Activated B cell treated with CpG ODN at 0.5 μM for 24 hours (primary cell): ENCODE measurements at regions of chr17 and their contacts with region 1.

Region 1: DNA sequence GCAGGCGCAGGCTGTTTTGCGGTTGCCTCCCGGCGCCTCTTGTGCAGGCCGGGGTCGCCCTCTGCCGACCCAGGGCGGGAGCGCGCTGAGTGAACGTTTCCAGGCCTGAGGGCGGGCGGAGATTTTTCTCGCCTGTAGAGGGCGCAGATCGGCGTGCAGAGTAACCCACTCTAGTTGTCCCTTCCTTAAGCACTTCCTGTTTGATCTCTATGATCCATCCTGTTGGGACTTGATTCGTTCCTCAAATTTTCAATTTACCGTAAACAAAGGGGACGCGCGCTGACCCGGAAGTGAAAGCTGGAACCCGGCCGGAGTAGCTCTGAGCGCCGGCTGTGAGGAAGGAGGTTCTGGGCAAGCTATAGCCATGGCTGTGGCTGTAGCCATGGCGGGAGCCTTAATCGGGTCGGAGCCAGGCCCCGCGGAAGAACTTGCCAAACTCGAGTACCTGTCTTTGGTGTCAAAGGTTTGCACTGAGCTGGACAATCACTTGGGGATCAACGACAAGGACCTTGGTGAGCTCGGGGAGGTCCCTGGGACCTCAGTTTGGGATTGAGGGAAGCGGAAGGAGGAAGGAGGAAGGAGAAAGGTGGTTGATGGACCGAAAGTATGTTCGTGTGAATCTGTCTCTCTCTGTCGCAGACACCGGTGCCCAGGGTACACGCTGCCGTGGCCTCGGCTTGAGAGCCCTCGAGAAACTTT is at the start of gene DHX8:
- DNase-seq: peak; percentile 99
- ATAC-seq: peak; percentile 97
- H3K4me3 Mint-ChIP-seq: peak within 1 kb of the TSS; percentile 94
- H3K27ac Mint-ChIP-seq: peak within 1 kb of the TSS; percentile 89
- H3K4me1 Mint-ChIP-seq: peaks cover 36% of the 10 kb centered on the region
- H3K27me3 Mint-ChIP-seq: no peaks in the 10 kb centered on the region
- CTCF ChIP-seq: peak; percentile 98
- total RNA-seq, gene DHX8: 60.6 and 63.4 TPM in 2 replicates

Region 2: GRCh38 chr17:42832974-42833766 is 650.7 kb before region 1 on chr17 and contains the start of gene PSME3:
- CTCF ChIA-PET with region 1: no interaction called
- POLR2A ChIA-PET with region 1: no interaction called
- intact Hi-C with region 1: loop called (anchors 5 kb)
- DNase-seq: peak; percentile 84
- ATAC-seq: peak; percentile 91
- H3K4me3 Mint-ChIP-seq: peak within 1 kb of the TSS; percentile 97
- H3K27ac Mint-ChIP-seq: peak within 1 kb of the TSS; percentile 99
- H3K4me1 Mint-ChIP-seq: peaks cover 24% of the 10 kb centered on the region
- H3K27me3 Mint-ChIP-seq: no peaks in the 10 kb centered on the region
- CTCF ChIP-seq: no peak
- total RNA-seq, gene PSME3: 136 and 141 TPM in 2 replicates

Region 3: DNA sequence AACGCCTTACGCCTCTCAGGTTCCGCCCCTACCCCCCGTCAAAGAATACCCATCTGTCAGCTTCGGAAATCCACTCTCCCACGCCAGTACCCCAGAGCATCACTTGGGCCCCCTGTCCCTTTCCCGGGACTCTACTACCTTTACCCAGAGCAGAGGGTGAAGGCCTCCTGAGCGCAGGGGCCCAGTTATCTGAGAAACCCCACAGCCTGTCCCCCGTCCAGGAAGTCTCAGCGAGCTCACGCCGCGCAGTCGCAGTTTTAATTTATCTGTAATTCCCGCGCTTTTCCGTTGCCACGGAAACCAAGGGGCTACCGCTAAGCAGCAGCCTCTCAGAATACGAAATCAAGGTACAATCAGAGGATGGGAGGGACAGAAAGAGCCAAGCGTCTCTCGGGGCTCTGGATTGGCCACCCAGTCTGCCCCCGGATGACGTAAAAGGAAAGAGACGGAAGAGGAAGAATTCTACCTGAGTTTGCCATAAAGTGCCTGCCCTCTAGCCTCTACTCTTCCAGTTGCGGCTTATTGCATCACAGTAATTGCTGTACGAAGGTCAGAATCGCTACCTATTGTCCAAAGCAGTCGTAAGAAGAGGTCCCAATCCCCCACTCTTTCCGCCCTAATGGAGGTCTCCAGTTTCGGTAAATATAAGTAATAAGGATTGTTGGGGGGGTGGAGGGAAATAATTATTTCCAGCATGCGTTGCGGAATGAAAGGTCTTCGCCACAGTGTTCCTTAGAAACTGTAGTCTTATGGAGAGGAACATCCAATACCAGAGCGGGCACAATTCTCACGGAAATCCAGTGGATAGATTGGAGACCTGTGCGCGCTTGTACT is 358.5 kb before region 1 on chr17 and contains the start of gene BRCA1:
- CTCF ChIA-PET with region 1: no interaction called
- POLR2A ChIA-PET with region 1: no interaction called
- intact Hi-C with region 1: loop called (anchors 1 kb)
- DNase-seq: peak; percentile 77
- ATAC-seq: peak; percentile 98
- H3K4me3 Mint-ChIP-seq: peak within 1 kb of the TSS; percentile 98
- H3K27ac Mint-ChIP-seq: peak within 1 kb of the TSS; percentile 90
- H3K4me1 Mint-ChIP-seq: peaks cover 44% of the 10 kb centered on the region
- H3K27me3 Mint-ChIP-seq: no peaks in the 10 kb centered on the region
- CTCF ChIP-seq: no peak
- total RNA-seq, gene BRCA1: 11.9 and 13.3 TPM in 2 replicates

Region 4: GRCh38 chr17:43338886-43339516 is 144.8 kb before region 1 on chr17:
- CTCF ChIA-PET with region 1: interaction called, 7 read pairs
- POLR2A ChIA-PET with region 1: interaction called, 5 read pairs
- intact Hi-C with region 1: loop called (anchors 1 kb)
- DNase-seq: peak; percentile 47
- ATAC-seq: no peak
- H3K4me3 Mint-ChIP-seq: no peak overlapping the region
- H3K27ac Mint-ChIP-seq: no peak overlapping the region
- H3K4me1 Mint-ChIP-seq: peaks cover 18% of the 10 kb centered on the region
- H3K27me3 Mint-ChIP-seq: no peaks in the 10 kb centered on the region
- CTCF ChIP-seq: peak; percentile 38

Region 5: DNA sequence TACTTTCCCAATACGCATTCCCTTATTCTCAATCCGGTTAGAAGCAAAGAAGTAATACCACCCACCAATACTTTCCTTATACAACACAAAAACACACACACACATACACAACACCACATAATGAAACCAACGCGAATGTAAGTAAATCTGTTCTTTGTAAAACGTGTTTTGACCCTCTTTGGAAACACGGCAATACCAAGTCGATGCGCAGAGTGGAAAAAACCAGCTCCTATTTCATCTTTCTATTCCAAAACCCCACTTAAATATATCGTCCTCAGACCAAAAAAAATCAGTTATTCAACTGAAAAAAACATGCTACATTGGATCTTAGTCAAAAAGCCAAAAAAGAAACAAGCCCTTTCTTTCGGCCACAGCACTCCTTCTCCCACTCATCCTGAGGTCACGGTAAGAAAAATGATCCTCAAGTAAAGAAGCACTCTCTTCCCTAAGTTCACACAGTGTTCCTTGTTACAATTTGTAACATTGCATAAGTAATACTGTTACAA is 116.0 kb before region 1 on chr17:
- CTCF ChIA-PET with region 1: interaction called, 8 read pairs
- POLR2A ChIA-PET with region 1: interaction called, 132 read pairs
- intact Hi-C with region 1: loop called (anchors 1 kb)
- DNase-seq: no peak
- ATAC-seq: peak; percentile 45
- H3K4me3 Mint-ChIP-seq: peak overlapping the region; percentile 95
- H3K27ac Mint-ChIP-seq: peak overlapping the region; percentile 100
- H3K4me1 Mint-ChIP-seq: peaks cover 51% of the 10 kb centered on the region
- H3K27me3 Mint-ChIP-seq: no peaks in the 10 kb centered on the region
- CTCF ChIP-seq: no peak

Region 6: DNA sequence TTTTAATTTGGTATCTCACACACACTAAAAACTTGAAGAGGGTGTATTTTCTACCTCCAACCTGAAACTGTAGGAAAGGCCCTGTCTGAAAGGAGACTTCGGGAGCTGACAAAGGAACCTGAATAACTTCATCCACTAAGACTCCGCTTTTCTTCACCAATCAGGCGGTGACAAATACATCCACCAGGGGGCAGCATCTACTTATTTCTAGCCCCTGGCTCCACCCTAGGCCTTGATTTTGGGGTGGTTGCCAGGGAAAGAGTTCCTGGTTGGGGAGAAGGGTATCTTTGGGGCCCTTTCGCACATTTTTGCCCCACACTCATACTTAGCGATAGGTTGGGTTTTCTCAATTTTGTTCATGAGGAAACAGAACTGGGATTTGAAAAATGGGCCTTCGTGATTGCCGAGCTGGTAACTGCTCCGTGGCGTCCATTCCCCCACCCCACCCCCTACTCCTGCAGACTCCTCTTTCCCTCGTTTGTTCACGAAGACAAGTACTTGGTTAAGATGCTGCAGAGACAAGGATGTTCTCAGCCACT is 89.8 kb before region 1 on chr17:
- CTCF ChIA-PET with region 1: interaction called, 110 read pairs
- POLR2A ChIA-PET with region 1: interaction called, 111 read pairs
- intact Hi-C with region 1: loop called (anchors 1 kb)
- DNase-seq: peak; percentile 66
- ATAC-seq: peak; percentile 35
- H3K4me3 Mint-ChIP-seq: no peak overlapping the region
- H3K27ac Mint-ChIP-seq: peak overlapping the region; percentile 41
- H3K4me1 Mint-ChIP-seq: peaks cover 42% of the 10 kb centered on the region
- H3K27me3 Mint-ChIP-seq: no peaks in the 10 kb centered on the region
- CTCF ChIP-seq: no peak

Region 7: GRCh38 chr17:43546319-43547188 is 62.7 kb after region 1 on chr17 and contains the start of gene ETV4:
- CTCF ChIA-PET with region 1: interaction called, 3 read pairs
- POLR2A ChIA-PET with region 1: interaction called, 3 read pairs
- intact Hi-C with region 1: loop called (anchors 1 kb)
- DNase-seq: peak; percentile 75
- ATAC-seq: peak; percentile 92
- H3K4me3 Mint-ChIP-seq: peak within 1 kb of the TSS; percentile 82
- H3K27ac Mint-ChIP-seq: no peak within 1 kb of the TSS
- H3K4me1 Mint-ChIP-seq: peaks cover 20% of the 10 kb centered on the region
- H3K27me3 Mint-ChIP-seq: peaks cover 46% of the 10 kb centered on the region
- CTCF ChIP-seq: no peak
- total RNA-seq, gene ETV4: 0.10 TPM in 1 of 2 replicates, not detected in the other